ENCODE measurements at regions of chr6 and their contacts with region 1.

Region 1: DNA sequence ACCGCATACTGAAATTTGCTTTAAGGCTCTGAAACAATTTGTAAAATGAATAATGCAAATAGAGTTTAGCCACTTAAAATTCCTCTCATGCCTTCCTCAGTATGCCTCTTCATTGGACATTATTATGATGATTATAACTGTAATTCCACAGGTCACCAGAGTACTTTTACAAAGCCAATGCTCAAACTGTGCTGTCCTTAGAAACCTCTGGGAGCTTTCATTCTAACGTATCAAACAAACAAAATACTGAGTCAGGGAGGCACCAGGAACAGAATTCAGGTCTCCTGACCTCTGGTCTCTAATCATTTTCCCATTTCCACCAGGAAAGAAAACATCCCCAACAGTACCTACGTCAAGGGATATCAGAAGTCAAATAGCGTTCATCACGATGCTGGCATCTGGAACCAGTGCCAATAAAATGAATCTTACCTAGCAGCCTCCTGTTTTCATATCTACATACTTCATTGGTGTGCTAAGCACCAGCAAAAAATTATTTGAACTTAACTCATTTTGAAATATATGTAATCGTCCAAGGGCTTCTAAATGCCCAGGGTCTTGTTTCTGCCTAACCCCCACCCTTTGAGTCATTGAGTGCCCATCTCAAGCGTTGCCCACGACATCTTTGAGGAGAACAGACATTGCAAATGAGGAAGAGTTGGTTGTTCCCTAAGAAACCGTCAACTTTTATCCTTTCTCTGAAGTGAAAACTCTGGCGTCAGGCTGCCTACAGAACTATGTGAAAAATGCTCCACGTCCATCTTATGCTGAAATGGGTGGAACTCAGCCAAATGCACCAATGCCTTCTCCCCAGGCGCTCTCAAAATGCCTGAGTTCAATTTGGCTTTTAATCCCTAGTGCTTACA is 37.9 kb downstream of the NEDD9 start:
- DNase-seq: peak in 1 of 2 donors; percentile 79
- H3K4me3 ChIP-seq: peak overlapping the region in 1 of 2 donors; percentile 4
- H3K27ac ChIP-seq: peak overlapping the region; percentile 70 to 83
- H3K4me1 ChIP-seq: peaks cover 6 to 50% of the 10 kb centered on the region in 2 donors
- H3K27me3 ChIP-seq: no peaks in the 10 kb centered on the region
- CTCF ChIP-seq: no peak

Region 2: GRCh38 chr6:11212625-11213024 is 18.0 kb after region 1 on chr6:
- intact Hi-C with region 1: loop called (anchors 2 kb)
- DNase-seq: peak in 1 of 2 donors; percentile 87
- H3K4me3 ChIP-seq: peak overlapping the region; percentile 0 to 32
- H3K27ac ChIP-seq: peak overlapping the region; percentile 91 to 94
- H3K4me1 ChIP-seq: peaks cover 43 to 90% of the 10 kb centered on the region in 2 donors
- H3K27me3 ChIP-seq: no peaks in the 10 kb centered on the region
- CTCF ChIP-seq: no peak

Measured in ascending aorta (tissue), 2 donors.